ENCODE measurements at regions of chr17 and their contacts with region 1.

Region 1: GRCh38 chr17:59440784-59441441 is 109.5 kb downstream of the YPEL2 start:
- DNase-seq: peak; percentile 75 to 96 (median 91)

Region 2: DNA sequence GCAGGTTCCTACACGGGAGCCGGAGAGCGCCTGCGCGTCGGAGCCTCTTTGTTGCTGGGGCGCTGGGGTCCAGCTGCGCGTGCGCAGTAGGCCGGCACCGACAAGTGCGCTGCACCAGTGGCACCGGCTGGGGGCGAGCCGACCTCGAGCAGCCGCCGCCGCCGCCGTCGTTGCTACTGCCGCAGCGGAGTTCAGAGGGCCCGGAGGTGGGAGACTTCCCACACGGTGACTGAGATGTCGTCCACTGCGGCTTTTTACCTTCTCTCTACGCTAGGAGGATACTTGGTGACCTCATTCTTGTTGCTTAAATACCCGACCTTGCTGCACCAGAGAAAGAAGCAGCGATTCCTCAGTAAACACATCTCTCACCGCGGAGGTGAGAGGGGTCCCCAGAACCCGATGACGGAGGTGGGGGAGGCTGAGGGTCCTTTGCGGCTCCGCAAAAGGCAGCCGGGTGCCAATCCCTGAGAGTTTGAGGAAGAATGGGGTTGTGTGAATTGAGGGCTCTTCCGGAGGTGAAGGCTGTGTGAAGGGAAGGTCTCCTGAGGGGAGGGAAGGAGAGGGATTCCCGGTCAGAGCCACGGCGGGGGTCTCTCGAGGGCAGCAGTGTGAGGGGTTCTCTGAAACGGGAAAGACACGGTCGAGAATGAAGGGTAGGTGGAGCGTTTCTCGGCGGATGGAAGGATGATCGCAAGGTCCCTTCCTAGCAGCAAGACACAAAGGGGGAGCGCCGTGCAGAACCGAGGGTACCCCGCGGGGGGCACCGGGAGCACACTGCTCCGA is 220.3 kb before region 1 on chr17 and contains the start of gene GDPD1:
- intact Hi-C with region 1: loop called (anchors 2 kb)
- DNase-seq: peak; percentile 90 to 99 (median 96)

Region 3: GRCh38 chr17:59311130-59311920 is 129.6 kb before region 1 on chr17:
- intact Hi-C with region 1: loop called (anchors 1 kb)
- DNase-seq: peak in 2 of 10 donors; percentile 13 to 37

Region 4: DNA sequence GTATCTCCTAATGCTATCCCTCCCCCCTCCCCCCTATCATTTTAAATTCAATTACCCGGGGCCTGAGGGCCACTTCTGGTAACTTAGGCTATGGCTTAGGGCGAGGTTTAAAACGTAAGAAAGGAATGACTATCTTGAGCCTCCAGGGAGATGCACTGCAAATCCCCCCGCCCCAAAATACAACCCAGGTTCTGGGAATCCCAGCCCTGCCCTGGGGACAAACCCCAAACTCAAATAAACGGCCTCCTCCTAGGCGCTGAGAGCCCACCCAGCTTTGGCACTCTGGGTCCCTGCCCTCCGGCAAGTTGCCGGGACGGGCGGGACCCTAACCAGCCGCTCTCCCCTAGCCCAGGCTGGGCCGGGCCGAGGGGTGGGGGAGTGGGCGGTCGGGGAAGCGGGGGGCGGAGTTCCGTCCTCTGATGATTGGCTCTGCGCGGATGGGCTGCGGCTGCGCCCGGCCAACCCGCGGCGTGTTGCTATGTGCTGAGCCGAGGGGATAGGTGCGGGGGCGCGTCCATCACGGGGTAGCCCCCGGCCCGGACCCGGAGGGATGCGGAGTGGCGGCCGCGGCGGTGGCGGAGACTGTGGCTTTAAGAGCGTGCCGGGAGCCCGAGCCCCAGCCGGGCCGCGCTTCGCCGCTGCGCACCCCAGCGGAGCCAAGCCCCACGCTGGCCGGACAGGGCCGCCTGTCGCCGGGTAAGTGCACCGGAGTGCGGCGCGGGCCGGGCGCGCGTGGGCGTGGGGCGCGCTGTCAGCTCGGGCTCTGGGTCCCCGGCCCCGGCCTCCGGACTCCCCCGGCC is 109.6 kb before region 1 on chr17 and contains the start of gene YPEL2:
- intact Hi-C with region 1: loop called (anchors 1 kb)
- DNase-seq: peak; percentile 95 to 100 (median 98)

Measured in posterior cingulate gyrus (tissue), 11 donors.